ENCODE measurements at regions of chr11 and their contacts with region 1.

Region 1: GRCh38 chr11:11787305-11788062 is 54.3 kb upstream of the USP47 start:
- DNase-seq: peak; percentile 81
- H3K4me3 Mint-ChIP-seq: no peak overlapping the region
- H3K27ac Mint-ChIP-seq: no peak overlapping the region
- H3K4me1 Mint-ChIP-seq: peaks cover 26% of the 10 kb centered on the region
- H3K27me3 Mint-ChIP-seq: no peaks in the 10 kb centered on the region
- CTCF ChIP-seq: peak; percentile 87

Region 2: DNA sequence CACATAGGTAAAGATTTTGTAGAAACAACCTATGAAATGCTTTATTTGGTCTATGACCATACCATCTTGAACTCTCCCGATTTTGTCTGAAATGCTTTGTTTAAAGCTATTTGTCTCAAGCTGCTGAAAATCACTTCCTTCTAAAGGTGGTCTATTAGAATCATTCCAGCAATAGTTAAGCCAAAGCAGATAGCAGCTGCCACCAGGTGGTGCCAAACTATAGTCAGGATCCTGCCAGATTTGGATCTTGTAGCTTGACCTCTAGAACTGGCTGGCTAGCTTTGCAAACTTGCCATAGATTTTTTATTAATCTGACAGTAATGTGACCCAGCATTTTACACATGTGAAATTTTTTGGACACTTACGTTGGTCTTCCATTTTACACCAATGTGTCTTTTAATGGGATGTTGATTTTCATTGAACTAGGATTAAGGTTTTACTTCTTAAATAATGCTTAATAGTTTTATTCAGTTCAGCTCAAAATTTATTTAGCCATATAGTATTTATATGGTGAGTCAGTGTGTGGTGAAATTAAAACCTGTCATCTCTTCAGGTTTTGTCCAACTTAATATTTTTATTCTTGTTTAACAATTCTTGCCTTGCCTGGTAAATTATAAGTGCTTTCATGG is 1016.7 kb before region 1 on chr11:
- CTCF ChIA-PET with region 1: interaction called, 3 read pairs
- POLR2A ChIA-PET with region 1: no interaction called
- intact Hi-C with region 1: loop called (anchors 5 kb)
- DNase-seq: peak; percentile 58
- H3K4me3 Mint-ChIP-seq: no peak overlapping the region
- H3K27ac Mint-ChIP-seq: no peak overlapping the region
- H3K4me1 Mint-ChIP-seq: no peaks in the 10 kb centered on the region
- H3K27me3 Mint-ChIP-seq: no peaks in the 10 kb centered on the region
- CTCF ChIP-seq: peak; percentile 53

Region 3: GRCh38 chr11:11036848-11037732 is 750.4 kb before region 1 on chr11:
- CTCF ChIA-PET with region 1: interaction called, 35 read pairs
- POLR2A ChIA-PET with region 1: interaction called, 5 read pairs
- intact Hi-C with region 1: loop called (anchors 1 kb)
- DNase-seq: peak; percentile 74
- H3K4me3 Mint-ChIP-seq: no peak overlapping the region
- H3K27ac Mint-ChIP-seq: no peak overlapping the region
- H3K4me1 Mint-ChIP-seq: peaks cover 7% of the 10 kb centered on the region
- H3K27me3 Mint-ChIP-seq: peaks cover 10% of the 10 kb centered on the region
- CTCF ChIP-seq: peak; percentile 75

Region 4: DNA sequence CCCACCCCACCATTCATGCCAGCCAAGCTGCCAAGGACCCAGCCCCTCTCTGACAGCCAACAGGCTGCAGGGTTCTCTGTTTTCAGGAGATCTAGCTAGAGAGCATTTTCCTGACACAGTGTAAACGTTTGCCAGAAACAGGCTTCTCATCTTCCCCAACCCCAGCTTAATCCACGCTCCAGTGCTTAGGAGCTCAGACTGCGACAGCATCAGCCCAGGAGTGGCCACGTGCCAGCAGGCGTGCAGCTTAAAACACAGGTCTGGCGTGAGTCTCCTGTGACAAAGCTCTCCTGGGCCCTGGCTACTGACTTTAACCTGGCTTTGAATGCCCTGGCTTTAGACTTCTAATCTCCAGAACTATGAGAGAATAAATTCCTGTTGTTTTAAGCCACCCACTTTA is 232.3 kb before region 1 on chr11:
- CTCF ChIA-PET with region 1: interaction called, 4 read pairs
- POLR2A ChIA-PET with region 1: no interaction called
- intact Hi-C with region 1: loop called (anchors 10 kb)
- DNase-seq: no peak
- H3K4me3 Mint-ChIP-seq: no peak overlapping the region
- H3K27ac Mint-ChIP-seq: no peak overlapping the region
- H3K4me1 Mint-ChIP-seq: peaks cover 8% of the 10 kb centered on the region
- H3K27me3 Mint-ChIP-seq: no peaks in the 10 kb centered on the region
- CTCF ChIP-seq: no peak

Region 5: GRCh38 chr11:11717064-11717725 is 70.3 kb before region 1 on chr11:
- CTCF ChIA-PET with region 1: interaction called, 8 read pairs
- POLR2A ChIA-PET with region 1: interaction called, 12 read pairs
- intact Hi-C with region 1: no loop called
- DNase-seq: peak; percentile 97
- H3K4me3 Mint-ChIP-seq: peak overlapping the region; percentile 63
- H3K27ac Mint-ChIP-seq: peak overlapping the region; percentile 89
- H3K4me1 Mint-ChIP-seq: peaks cover 12% of the 10 kb centered on the region
- H3K27me3 Mint-ChIP-seq: no peaks in the 10 kb centered on the region
- CTCF ChIP-seq: no peak

Region 6: GRCh38 chr11:12182676-12183541 is 395.4 kb after region 1 on chr11:
- CTCF ChIA-PET with region 1: no interaction called
- POLR2A ChIA-PET with region 1: no interaction called
- intact Hi-C with region 1: no loop called
- DNase-seq: peak; percentile 97
- H3K4me3 Mint-ChIP-seq: no peak overlapping the region
- H3K27ac Mint-ChIP-seq: peak overlapping the region; percentile 82
- H3K4me1 Mint-ChIP-seq: peaks cover 46% of the 10 kb centered on the region
- H3K27me3 Mint-ChIP-seq: no peaks in the 10 kb centered on the region
- CTCF ChIP-seq: no peak